CD4-positive, alpha-beta memory T cell (primary cell): ENCODE measurements at regions of chr7 and their contacts with region 1.

Region 1: GRCh38 chr7:151315038-151315655 is 26.5 kb upstream of the NUB1 start:
- DNase-seq: peak; percentile 80 to 82 (median 81)
- H3K4me3 ChIP-seq: no peak overlapping the region
- H3K4me3 Mint-ChIP-seq: peak overlapping the region in 5 of 8 donors; percentile 36 to 69 (median 66)
- H3K27ac ChIP-seq: no peak overlapping the region
- H3K27ac Mint-ChIP-seq: peak overlapping the region in 4 of 7 donors; percentile 38 to 80 (median 74)
- H3K4me1 ChIP-seq: peaks cover 4% of the 10 kb centered on the region
- H3K4me1 Mint-ChIP-seq: peaks cover 2 to 8% (median 5%) of the 10 kb centered on the region in 4 donors
- H3K27me3 ChIP-seq: no peaks in the 10 kb centered on the region
- H3K27me3 Mint-ChIP-seq: peaks cover 0 to 1% of the 10 kb centered on the region in 2 donors

Region 2: DNA sequence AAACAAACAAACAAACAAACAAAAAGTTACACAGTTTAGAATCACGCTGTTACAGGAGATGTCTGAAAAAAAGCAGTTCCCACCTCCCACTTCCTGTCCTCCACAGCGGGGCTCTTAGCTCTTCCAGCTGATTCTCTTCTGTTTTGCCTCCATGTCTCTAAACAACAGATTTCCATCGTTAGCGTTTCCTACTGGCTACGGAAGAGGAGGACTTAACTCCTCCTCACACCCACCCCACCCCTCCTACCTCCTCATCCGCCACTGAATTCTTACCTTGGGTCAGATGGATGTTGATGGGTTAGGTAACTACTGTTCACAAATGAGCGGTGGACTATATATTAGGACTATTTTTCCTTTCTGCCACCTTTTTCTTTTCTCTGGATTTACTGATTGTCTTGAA is 10.3 kb before region 1 on chr7:
- CTCF ChIA-PET with region 1: interaction called, 28 read pairs
- POLR2A ChIA-PET with region 1: no interaction called
- intact Hi-C with region 1: no loop called
- DNase-seq: no peak
- H3K4me3 ChIP-seq: no peak overlapping the region
- H3K4me3 Mint-ChIP-seq: peak overlapping the region in 6 of 8 donors; percentile 35 to 71 (median 56)
- H3K27ac ChIP-seq: no peak overlapping the region
- H3K27ac Mint-ChIP-seq: peak overlapping the region in 2 of 7 donors; percentile 41 to 69
- H3K4me1 ChIP-seq: peaks cover 5% of the 10 kb centered on the region
- H3K4me1 Mint-ChIP-seq: peaks cover 3 to 12% (median 8%) of the 10 kb centered on the region in 4 donors
- H3K27me3 ChIP-seq: peaks cover 7% of the 10 kb centered on the region
- H3K27me3 Mint-ChIP-seq: peaks cover 23 to 31% of the 10 kb centered on the region in 2 donors

Region 3: GRCh38 chr7:151341357-151342101 is 26.4 kb after region 1 on chr7 and contains the start of gene NUB1:
- CTCF ChIA-PET with region 1: interaction called, 27 read pairs
- POLR2A ChIA-PET with region 1: interaction called, 14 read pairs
- intact Hi-C with region 1: no loop called
- DNase-seq: peak; percentile 84 to 94 (median 88)
- H3K4me3 ChIP-seq: peak within 1 kb of the TSS; percentile 80 to 86
- H3K4me3 Mint-ChIP-seq: peak within 1 kb of the TSS; percentile 79 to 91 (median 89)
- H3K27ac ChIP-seq: peak within 1 kb of the TSS; percentile 81
- H3K27ac Mint-ChIP-seq: peak within 1 kb of the TSS; percentile 87 to 97 (median 93)
- H3K4me1 ChIP-seq: peaks cover 28% of the 10 kb centered on the region
- H3K4me1 Mint-ChIP-seq: peaks cover 19 to 42% (median 29%) of the 10 kb centered on the region in 4 donors
- H3K27me3 ChIP-seq: no peaks in the 10 kb centered on the region
- H3K27me3 Mint-ChIP-seq: no peaks in the 10 kb centered on the region
- total RNA-seq, gene NUB1: 116 to 119 TPM

Region 4: DNA sequence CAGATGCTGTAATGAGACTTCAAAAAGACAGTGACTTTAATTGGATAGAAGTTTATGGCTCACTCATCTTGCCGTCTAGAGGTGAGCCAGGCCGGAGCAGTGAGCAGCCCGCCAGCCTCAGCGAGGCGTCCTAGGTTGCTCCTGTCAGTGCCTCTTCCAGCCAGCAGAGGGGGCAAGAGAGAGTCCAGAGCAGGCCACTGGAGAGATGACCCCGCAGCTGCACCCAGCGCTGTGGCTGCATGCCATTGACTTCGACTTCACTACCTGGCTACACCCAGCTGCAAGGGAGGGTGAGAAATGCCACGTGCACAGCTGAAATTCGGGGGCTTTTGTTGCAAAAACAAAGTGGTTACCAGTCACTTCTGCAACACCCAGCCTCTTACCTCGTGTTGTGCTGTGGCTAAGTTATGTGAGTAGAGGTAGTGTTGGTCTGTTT is 53.0 kb after region 1 on chr7:
- CTCF ChIA-PET with region 1: interaction called, 41 read pairs
- POLR2A ChIA-PET with region 1: no interaction called
- intact Hi-C with region 1: loop called (anchors 1 kb)
- DNase-seq: peak; percentile 74 to 81 (median 75)
- H3K4me3 ChIP-seq: no peak overlapping the region
- H3K4me3 Mint-ChIP-seq: peak overlapping the region in 1 of 8 donors; percentile 38
- H3K27ac ChIP-seq: no peak overlapping the region
- H3K27ac Mint-ChIP-seq: peak overlapping the region in 6 of 7 donors; percentile 44 to 92 (median 88)
- H3K4me1 ChIP-seq: peaks cover 10% of the 10 kb centered on the region
- H3K4me1 Mint-ChIP-seq: peaks cover 6 to 16% (median 10%) of the 10 kb centered on the region in 4 donors
- H3K27me3 ChIP-seq: no peaks in the 10 kb centered on the region
- H3K27me3 Mint-ChIP-seq: no peaks in the 10 kb centered on the region

Region 5: GRCh38 chr7:151759591-151760042 is 444.5 kb after region 1 on chr7:
- CTCF ChIA-PET with region 1: interaction called, 4 read pairs
- POLR2A ChIA-PET with region 1: no interaction called
- intact Hi-C with region 1: loop called (anchors 5 kb)
- DNase-seq: peak; percentile 50 to 59 (median 58)
- H3K4me3 ChIP-seq: no peak overlapping the region
- H3K4me3 Mint-ChIP-seq: no peak overlapping the region
- H3K27ac ChIP-seq: no peak overlapping the region
- H3K27ac Mint-ChIP-seq: peak overlapping the region in 6 of 7 donors; percentile 41 to 79 (median 56)
- H3K4me1 ChIP-seq: peaks cover 19% of the 10 kb centered on the region
- H3K4me1 Mint-ChIP-seq: peaks cover 9 to 37% (median 29%) of the 10 kb centered on the region in 4 donors
- H3K27me3 ChIP-seq: no peaks in the 10 kb centered on the region
- H3K27me3 Mint-ChIP-seq: no peaks in the 10 kb centered on the region